ENCODE measurements at regions of chr14 and their contacts with region 1.

Region 1: GRCh38 chr14:64671591-64671990 is 32.6 kb upstream of the PLEKHG3 start:
- DNase-seq: no peak
- H3K4me3 ChIP-seq: no peak overlapping the region
- CTCF ChIP-seq: no peak
- POLR2A ChIP-seq: no peak

Region 2: GRCh38 chr14:64636208-64636979 is 35.2 kb before region 1 on chr14:
- intact Hi-C with region 1: loop called (anchors 2 kb)
- DNase-seq: peak; percentile 46 to 94
- H3K4me3 ChIP-seq: no peak overlapping the region
- CTCF ChIP-seq: peak in 1 of 3 donors; percentile 36
- POLR2A ChIP-seq: no peak

Region 3: DNA sequence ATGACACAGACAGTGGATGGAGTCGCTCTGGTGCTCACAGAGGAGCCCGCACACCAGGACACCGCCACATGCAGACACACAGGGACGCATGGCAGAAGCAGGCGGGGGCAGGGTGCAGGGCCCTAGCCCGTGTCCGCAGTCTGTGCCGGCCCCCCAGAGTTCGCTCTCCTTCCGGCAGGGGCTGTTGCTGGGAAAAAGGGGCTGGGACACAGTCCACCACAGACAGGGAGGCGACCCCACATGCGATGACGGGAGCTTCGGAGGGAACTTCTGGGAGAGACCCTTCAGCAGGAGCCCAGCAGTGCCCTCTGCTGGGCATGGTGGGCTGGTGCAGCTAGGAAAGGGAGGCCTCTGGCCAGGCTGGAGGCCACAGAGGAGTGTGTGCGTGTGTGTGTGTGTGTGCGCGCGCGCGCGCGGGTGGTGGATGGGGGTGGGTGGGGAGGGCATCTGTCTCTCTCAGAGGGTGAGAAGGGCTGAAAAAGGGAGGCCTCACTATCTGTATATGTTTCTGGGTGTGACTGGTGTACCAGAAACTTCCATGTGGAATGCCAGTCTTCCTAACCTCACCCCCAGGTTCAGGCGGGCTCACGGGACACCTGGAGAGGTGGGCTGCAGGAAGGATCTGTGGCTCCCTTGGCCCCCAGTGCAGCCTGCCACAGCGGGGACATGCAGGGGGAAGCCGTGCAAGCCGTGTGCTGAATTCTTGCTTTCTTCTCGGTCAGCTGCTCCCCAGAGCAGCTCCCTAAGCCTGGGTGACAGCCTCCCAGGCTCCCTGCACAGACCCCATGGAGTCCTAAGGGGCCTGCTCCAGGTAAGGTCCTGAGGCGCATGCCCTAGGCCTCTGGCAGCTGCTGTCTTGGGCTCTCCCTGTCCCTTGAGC is 93.3 kb after region 1 on chr14:
- intact Hi-C with region 1: loop called (anchors 5 kb)
- DNase-seq: peak in 1 of 2 donors; percentile 93
- H3K4me3 ChIP-seq: no peak overlapping the region
- CTCF ChIP-seq: peak in 1 of 3 donors; percentile 82
- POLR2A ChIP-seq: no peak

Region 4: DNA sequence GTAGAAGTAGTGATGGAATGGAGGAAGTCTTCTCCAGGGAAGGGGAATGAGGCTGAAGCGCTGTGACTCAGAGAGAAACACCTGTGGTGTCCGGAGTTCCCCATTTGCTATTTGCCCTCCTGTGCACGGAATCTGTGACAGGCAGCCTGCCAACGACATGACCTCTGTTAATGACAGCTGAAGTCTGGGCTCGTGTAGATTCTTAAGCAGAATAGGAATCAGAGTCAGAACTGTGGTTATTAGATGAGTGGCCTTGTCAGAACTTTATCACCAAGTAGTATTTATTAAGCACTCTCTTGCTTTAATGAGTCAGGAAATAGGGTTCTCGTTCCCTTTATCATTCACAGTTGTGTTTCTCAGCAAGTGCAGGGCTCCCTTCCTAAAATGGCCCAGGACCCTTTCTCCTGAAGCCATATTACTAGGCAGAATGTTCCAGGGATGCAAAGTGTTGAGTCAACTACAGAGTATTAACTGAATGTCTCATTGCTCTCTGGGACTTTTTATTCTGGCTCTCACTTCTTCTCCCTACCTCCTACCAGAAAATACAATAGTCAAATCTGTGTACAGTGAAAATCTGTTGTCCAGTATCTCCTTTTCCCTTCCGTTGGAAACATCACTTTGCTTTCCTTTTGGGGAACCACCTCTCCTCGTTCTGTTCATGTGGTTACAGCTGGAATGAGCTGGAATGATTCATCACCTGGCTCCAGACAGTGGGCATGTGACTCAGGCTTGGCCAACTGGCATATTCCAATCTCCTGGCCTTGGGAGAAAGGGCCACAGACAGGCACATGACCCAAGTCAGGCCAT is 508.5 kb after region 1 on chr14:
- intact Hi-C with region 1: no loop called
- DNase-seq: peak; percentile 61 to 90
- H3K4me3 ChIP-seq: no peak overlapping the region
- CTCF ChIP-seq: no peak
- POLR2A ChIP-seq: no peak

Measured in lower leg skin (tissue), 4 donors.